H1 (cell line): ENCODE measurements at regions of chr2 and their contacts with region 1.

Region 1: GRCh38 chr2:118882709-118883210 is 35.3 kb upstream of the EN1 start:
- DNase-seq: peak in 1 of 2 experiments; percentile 80
- H3K4me3 ChIP-seq: peak overlapping the region in 1 of 4 experiments; percentile 46; a peak in 2 of 8 replicates
- H3K27ac ChIP-seq: no peak overlapping the region
- H3K4me1 ChIP-seq: peaks cover 0 to 2% (median 1%) of the 10 kb centered on the region in 4 experiments; a peak in 2 of 7 replicates
- H3K27me3 ChIP-seq: no peaks in the 10 kb centered on the region; a peak in 3 of 7 replicates
- CTCF ChIP-seq: peak; percentile 93 to 100 (median 99)
- EP300 ChIP-seq: no peak
- POLR2A ChIP-seq: no peak
- RAD21 ChIP-seq: peak; percentile 96 to 97

Region 2: GRCh38 chr2:118902266-118903028 is 19.7 kb after region 1 on chr2:
- CTCF ChIA-PET with region 1: interaction called, 21 read pairs
- POLR2A ChIA-PET with region 1: no interaction called
- DNase-seq: no peak
- H3K4me3 ChIP-seq: no peak overlapping the region
- H3K27ac ChIP-seq: no peak overlapping the region
- H3K4me1 ChIP-seq: peaks cover 0 to 4% (median 0%) of the 10 kb centered on the region in 4 experiments; a peak in 1 of 7 replicates
- H3K27me3 ChIP-seq: no peaks in the 10 kb centered on the region
- CTCF ChIP-seq: no peak
- EP300 ChIP-seq: no peak
- POLR2A ChIP-seq: no peak
- RAD21 ChIP-seq: no peak

Region 3: DNA sequence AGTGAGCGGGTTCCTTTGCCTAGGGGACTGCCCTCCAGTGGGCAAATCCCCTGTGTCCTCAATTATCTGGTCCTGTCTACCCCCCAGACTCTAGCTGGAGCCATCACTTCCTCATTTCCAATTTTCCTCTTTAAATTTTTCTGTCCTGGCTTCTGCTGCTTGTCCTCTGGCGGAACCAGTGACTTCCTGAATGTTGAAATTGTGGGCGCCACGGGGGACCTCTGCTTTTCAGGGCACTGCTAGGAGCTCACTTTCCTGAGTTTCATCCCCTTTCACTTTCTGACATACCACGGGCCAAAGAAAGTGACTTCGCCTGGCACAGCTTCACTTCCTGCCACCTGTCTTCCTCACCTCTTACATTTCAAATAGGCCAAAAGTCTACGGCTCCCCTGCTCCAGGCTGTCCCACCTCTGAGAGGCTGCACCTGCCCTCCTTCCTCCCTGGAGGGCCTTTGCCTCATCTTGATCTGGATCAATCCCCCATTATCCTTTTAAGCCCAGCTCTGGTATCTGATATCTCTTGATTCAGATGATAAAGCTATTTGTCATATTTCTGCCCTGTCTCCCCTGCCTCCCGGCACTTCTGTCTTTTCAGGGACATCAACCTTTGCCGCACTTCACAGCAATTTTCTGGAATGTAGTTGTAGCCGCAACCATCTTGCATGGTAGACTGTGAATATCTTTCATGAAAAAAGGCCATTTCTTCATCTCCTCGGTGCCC is 57.9 kb after region 1 on chr2:
- CTCF ChIA-PET with region 1: interaction called, 23 read pairs
- POLR2A ChIA-PET with region 1: no interaction called
- DNase-seq: no peak
- H3K4me3 ChIP-seq: no peak overlapping the region
- H3K27ac ChIP-seq: no peak overlapping the region
- H3K4me1 ChIP-seq: no peaks in the 10 kb centered on the region
- H3K27me3 ChIP-seq: no peaks in the 10 kb centered on the region; a peak in 1 of 7 replicates
- CTCF ChIP-seq: no peak
- EP300 ChIP-seq: no peak
- POLR2A ChIP-seq: no peak
- RAD21 ChIP-seq: no peak

Region 4: GRCh38 chr2:119011162-119011909 is 128.6 kb after region 1 on chr2:
- CTCF ChIA-PET with region 1: interaction called, 14 read pairs
- POLR2A ChIA-PET with region 1: no interaction called
- DNase-seq: peak; percentile 21 to 87
- H3K4me3 ChIP-seq: peak overlapping the region in 3 of 4 experiments; percentile 6 to 51 (median 19); a peak in 4 of 8 replicates
- H3K27ac ChIP-seq: no peak overlapping the region
- H3K4me1 ChIP-seq: peaks cover 0 to 3% (median under 1%) of the 10 kb centered on the region in 4 experiments; a peak in 4 of 7 replicates
- H3K27me3 ChIP-seq: peaks cover 0 to 4% (median 3%) of the 10 kb centered on the region in 4 experiments; a peak in 5 of 7 replicates
- CTCF ChIP-seq: peak; percentile 73 to 80 (median 74)
- EP300 ChIP-seq: no peak
- POLR2A ChIP-seq: no peak
- RAD21 ChIP-seq: peak; percentile 88 to 92

Region 5: DNA sequence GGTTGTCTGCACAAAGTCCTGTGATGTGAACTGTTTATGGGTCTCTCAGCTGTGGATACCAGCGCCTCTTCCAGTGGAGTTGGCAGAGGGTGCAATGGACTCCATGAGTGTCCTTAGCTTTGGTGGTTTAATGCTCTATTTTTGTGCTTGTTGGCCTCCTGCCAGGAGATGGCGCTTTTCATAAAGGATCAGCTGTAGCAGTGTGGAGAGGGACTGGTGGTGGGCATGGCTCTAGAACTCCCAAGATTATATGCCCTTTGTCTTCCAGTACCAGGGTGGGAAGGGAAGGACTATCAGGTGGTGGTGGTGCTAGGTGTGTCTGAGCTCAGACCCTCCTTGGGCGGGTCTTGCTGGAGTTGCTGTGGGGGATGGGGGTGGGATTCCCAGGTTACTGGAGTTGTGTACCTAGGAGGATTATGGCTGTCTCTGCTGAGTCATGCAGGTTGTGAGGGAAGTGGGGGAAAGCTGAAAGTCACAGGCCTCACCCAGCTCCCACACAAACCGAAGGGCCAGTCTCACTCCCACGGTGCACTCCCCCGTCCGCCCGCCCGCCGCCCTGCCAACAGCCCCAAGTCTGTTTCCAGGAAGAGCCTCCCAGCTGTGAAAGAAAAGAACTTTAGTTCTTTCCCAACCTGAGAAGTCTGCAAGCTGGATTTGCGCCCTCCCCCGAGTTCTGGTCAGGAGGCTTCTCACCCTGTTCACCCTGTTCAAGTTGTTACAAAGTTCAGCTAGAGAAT is 167.4 kb after region 1 on chr2:
- CTCF ChIA-PET with region 1: interaction called, 15 read pairs
- POLR2A ChIA-PET with region 1: no interaction called
- DNase-seq: peak in 1 of 2 experiments; percentile 79
- H3K4me3 ChIP-seq: no peak overlapping the region
- H3K27ac ChIP-seq: no peak overlapping the region
- H3K4me1 ChIP-seq: peaks cover 0 to 4% (median 2%) of the 10 kb centered on the region in 4 experiments; a peak in 3 of 7 replicates
- H3K27me3 ChIP-seq: no peaks in the 10 kb centered on the region
- CTCF ChIP-seq: peak; percentile 39 to 71 (median 68)
- EP300 ChIP-seq: no peak
- POLR2A ChIP-seq: no peak
- RAD21 ChIP-seq: peak; percentile 57 to 62

Region 6: GRCh38 chr2:119174216-119175037 is 291.7 kb after region 1 on chr2:
- CTCF ChIA-PET with region 1: interaction called, 12 read pairs
- POLR2A ChIA-PET with region 1: no interaction called
- DNase-seq: peak in 1 of 2 experiments; percentile 91
- H3K4me3 ChIP-seq: no peak overlapping the region
- H3K27ac ChIP-seq: no peak overlapping the region
- H3K4me1 ChIP-seq: no peaks in the 10 kb centered on the region; a peak in 1 of 7 replicates
- H3K27me3 ChIP-seq: no peaks in the 10 kb centered on the region
- CTCF ChIP-seq: peak; percentile 87 to 92 (median 88)
- EP300 ChIP-seq: no peak
- POLR2A ChIP-seq: no peak
- RAD21 ChIP-seq: peak; percentile 66 to 81

Region 7: GRCh38 chr2:119311356-119311755 is 428.6 kb after region 1 on chr2:
- CTCF ChIA-PET with region 1: interaction called, 27 read pairs
- POLR2A ChIA-PET with region 1: no interaction called
- DNase-seq: no peak
- H3K4me3 ChIP-seq: no peak overlapping the region
- H3K27ac ChIP-seq: no peak overlapping the region
- H3K4me1 ChIP-seq: peaks cover 0 to 5% (median 1%) of the 10 kb centered on the region in 4 experiments; a peak in 2 of 7 replicates
- H3K27me3 ChIP-seq: no peaks in the 10 kb centered on the region
- CTCF ChIP-seq: peak; percentile 27 to 53 (median 51)
- EP300 ChIP-seq: no peak
- POLR2A ChIP-seq: no peak
- RAD21 ChIP-seq: peak; percentile 61 to 73